ENCODE measurements at regions of chr14 and their contacts with region 1.

Region 1: GRCh38 chr14:59918824-59919569 is 947 bp upstream of the LRRC9 start:
- DNase-seq: peak; percentile 70
- H3K4me3 ChIP-seq: peak overlapping the region; percentile 55
- H3K27ac ChIP-seq: no peak overlapping the region
- H3K4me1 ChIP-seq: no peaks in the 10 kb centered on the region
- H3K27me3 ChIP-seq: no peaks in the 10 kb centered on the region
- CTCF ChIP-seq: peak; percentile 63

Region 2: DNA sequence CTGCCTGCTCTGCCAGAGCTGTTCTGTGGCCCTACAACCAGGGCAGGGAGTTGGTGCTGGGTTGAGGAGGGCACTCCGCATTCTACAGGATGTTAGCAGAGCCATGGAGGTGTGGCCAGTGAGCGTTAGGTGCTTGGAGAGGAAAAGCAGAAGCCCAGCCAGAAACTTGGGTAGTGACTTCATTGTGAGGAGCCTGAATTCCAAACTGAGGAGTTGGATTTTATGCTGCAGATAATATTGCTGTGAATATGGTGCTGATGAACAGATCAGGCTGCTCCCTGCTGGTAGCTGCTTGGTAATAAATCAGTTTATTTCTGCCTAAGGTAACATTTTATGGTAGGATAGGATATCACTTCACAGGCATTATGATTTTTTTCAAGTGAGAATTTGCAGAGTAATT is 335.2 kb before region 1 on chr14:
- CTCF ChIA-PET with region 1: no interaction called
- POLR2A ChIA-PET with region 1: no interaction called
- intact Hi-C with region 1: loop called (anchors 5 kb)
- DNase-seq: peak; percentile 69
- H3K4me3 ChIP-seq: no peak overlapping the region
- H3K27ac ChIP-seq: no peak overlapping the region
- H3K4me1 ChIP-seq: peaks cover 39% of the 10 kb centered on the region
- H3K27me3 ChIP-seq: no peaks in the 10 kb centered on the region
- CTCF ChIP-seq: peak; percentile 50; the same call in 1 of the 2 replicates

Region 3: GRCh38 chr14:59632381-59632780 is 286.6 kb before region 1 on chr14:
- CTCF ChIA-PET with region 1: no interaction called
- POLR2A ChIA-PET with region 1: no interaction called
- intact Hi-C with region 1: loop called (anchors 5 kb)
- DNase-seq: peak; percentile 58
- H3K4me3 ChIP-seq: no peak overlapping the region
- H3K27ac ChIP-seq: no peak overlapping the region
- H3K4me1 ChIP-seq: peaks cover 6% of the 10 kb centered on the region
- H3K27me3 ChIP-seq: peaks cover 17% of the 10 kb centered on the region
- CTCF ChIP-seq: peak; percentile 75

Region 4: DNA sequence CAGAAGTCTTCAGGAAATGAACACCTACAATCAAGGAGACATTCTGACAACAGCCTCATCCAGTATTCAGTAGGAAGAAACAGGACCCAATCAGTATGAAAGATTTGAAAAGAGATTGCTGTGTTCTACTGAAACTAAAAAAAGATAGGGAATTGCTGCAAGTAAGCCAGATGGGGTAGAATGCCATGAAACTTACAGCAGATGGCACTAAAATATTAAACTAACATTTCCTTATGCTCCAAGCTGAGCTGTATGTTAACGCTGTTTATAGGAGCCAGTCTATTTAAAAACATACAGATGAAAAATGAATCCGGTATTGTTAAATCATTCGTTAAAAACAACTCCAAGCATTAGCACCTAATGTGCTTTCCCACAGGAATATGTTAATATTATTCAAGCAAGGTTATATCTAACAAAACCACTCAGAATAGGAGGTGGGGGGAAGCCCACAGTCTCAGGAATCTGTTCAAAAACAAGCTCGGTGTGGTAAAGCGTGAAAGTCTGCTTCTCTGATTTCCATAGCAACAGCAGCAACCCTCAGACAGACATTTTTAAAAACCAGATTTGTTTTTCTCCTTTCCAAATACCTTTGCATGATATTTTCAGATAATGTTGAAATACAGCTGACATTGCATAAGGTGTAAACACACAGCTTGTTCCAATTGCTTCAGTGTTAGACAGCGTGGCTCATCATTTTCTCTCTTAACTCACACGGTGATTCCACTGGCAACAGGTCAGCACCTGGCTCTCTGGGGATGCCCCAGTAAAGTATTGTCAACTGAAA is 211.0 kb before region 1 on chr14:
- CTCF ChIA-PET with region 1: interaction called, 4 read pairs
- POLR2A ChIA-PET with region 1: no interaction called
- intact Hi-C with region 1: loop called (anchors 5 kb)
- DNase-seq: peak; percentile 37
- H3K4me3 ChIP-seq: no peak overlapping the region
- H3K27ac ChIP-seq: no peak overlapping the region
- H3K4me1 ChIP-seq: no peaks in the 10 kb centered on the region
- H3K27me3 ChIP-seq: no peaks in the 10 kb centered on the region
- CTCF ChIP-seq: peak; percentile 36

Region 5: DNA sequence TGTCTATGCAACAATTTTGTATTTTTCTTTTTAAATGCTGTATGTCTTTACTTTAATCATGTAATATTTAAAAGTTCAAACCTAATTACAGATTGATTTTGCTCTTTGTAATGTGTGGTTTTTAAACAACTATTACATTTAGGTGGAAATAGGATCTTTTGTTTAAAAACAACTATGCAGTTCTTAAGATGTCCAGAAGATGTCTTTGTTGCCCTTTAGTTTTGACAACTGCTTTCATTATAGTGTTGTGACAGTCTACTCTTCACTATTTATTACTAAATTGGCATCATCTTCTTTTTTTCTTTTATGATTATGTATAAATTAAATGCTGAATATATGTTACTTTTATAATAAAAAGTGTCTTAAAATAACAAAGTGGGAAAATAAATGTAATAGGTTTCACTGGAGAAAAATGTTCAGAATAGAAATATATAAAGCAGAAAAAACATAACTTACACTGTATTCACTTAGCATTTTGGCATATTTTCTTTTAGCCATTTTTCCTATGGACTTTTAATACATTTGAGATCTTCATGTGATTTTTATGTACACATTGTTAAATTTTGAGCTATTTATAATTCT is 145.6 kb after region 1 on chr14:
- CTCF ChIA-PET with region 1: no interaction called
- POLR2A ChIA-PET with region 1: no interaction called
- intact Hi-C with region 1: no loop called
- DNase-seq: peak; percentile 45
- H3K4me3 ChIP-seq: no peak overlapping the region
- H3K27ac ChIP-seq: no peak overlapping the region
- H3K4me1 ChIP-seq: no peaks in the 10 kb centered on the region
- H3K27me3 ChIP-seq: no peaks in the 10 kb centered on the region
- CTCF ChIP-seq: peak; percentile 67

Region 6: GRCh38 chr14:60670989-60671388 is 752.0 kb after region 1 on chr14:
- CTCF ChIA-PET with region 1: no interaction called
- POLR2A ChIA-PET with region 1: no interaction called
- intact Hi-C with region 1: no loop called
- DNase-seq: no peak
- H3K4me3 ChIP-seq: no peak overlapping the region
- H3K27ac ChIP-seq: no peak overlapping the region
- H3K4me1 ChIP-seq: no peaks in the 10 kb centered on the region
- H3K27me3 ChIP-seq: no peaks in the 10 kb centered on the region
- CTCF ChIP-seq: no peak

Measured in A673 (cell line).